PC-3 (cell line): ENCODE measurements at regions of chr20 and their contacts with region 1.

Region 1: GRCh38 chr20:32945710-32946221 is 58.5 kb downstream of the SUN5 start:
- DNase-seq: peak; percentile 51
- ATAC-seq: peak; percentile 64
- H3K4me3 ChIP-seq: no peak overlapping the region
- H3K27ac ChIP-seq: no peak overlapping the region
- H3K4me1 ChIP-seq: no peaks in the 10 kb centered on the region
- H3K27me3 ChIP-seq: peaks cover 50% of the 10 kb centered on the region
- CTCF ChIP-seq: peak; percentile 70

Region 2: DNA sequence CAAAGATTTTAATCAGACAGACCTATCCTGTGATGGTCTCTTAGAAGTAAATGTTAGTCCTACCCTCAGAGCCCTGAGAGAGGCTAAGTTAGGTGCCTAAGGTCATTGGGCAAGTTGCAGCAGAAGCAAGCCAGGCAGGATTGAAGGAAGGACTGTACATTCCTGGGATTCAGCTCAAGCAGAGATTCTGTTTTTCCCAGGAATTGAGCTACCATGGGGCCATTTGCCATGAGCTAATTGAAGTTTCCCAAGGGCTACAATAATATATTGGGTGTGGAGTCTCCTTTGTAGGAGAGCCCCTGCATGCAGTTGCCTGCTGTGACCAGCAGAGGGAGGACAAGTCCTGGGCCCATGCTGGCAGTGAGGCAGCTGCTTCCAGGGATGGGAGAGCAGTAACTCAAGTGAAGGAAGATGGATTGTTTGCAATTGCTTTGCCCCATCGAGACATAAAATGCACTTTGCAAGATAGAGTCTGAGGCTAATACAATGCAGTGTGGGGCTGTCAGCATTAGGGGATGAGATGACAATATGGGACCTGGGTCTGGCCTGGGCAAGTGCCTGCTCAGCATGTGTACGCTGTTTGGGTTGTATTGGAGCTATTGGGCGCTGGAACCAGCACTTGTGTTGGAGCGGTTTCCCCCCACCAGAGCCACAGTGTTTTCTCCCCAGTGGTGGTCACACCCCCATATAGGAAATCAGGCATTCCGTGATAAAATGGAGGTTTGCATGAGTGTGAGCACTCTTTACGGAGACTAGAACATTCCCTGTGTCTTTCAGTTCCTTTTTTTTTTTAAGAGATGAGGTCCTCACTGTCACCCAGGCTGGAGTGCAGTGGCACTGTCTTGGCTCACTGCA is 155.6 kb before region 1 on chr20:
- CTCF ChIA-PET with region 1: no interaction called
- POLR2A ChIA-PET with region 1: no interaction called
- intact Hi-C with region 1: loop called (anchors 1 kb)
- DNase-seq: peak; percentile 79
- ATAC-seq: peak; percentile 100
- H3K4me3 ChIP-seq: no peak overlapping the region
- H3K27ac ChIP-seq: no peak overlapping the region
- H3K4me1 ChIP-seq: no peaks in the 10 kb centered on the region
- H3K27me3 ChIP-seq: no peaks in the 10 kb centered on the region
- CTCF ChIP-seq: peak; percentile 97